ENCODE measurements at regions of chr12 and their contacts with region 1.

Region 1: GRCh38 chr12:123601602-123602489 is at the start of gene DDX55:
- DNase-seq: peak; percentile 86
- ATAC-seq: peak; percentile 89
- H3K4me3 Mint-ChIP-seq: peak within 1 kb of the TSS; percentile 97
- H3K27ac Mint-ChIP-seq: peak within 1 kb of the TSS; percentile 92
- H3K4me1 Mint-ChIP-seq: peaks cover 24% of the 10 kb centered on the region
- H3K27me3 Mint-ChIP-seq: no peaks in the 10 kb centered on the region
- CTCF ChIP-seq: no peak
- total RNA-seq, gene DDX55: 28.8 and 35.0 TPM in 2 replicates

Region 2: DNA sequence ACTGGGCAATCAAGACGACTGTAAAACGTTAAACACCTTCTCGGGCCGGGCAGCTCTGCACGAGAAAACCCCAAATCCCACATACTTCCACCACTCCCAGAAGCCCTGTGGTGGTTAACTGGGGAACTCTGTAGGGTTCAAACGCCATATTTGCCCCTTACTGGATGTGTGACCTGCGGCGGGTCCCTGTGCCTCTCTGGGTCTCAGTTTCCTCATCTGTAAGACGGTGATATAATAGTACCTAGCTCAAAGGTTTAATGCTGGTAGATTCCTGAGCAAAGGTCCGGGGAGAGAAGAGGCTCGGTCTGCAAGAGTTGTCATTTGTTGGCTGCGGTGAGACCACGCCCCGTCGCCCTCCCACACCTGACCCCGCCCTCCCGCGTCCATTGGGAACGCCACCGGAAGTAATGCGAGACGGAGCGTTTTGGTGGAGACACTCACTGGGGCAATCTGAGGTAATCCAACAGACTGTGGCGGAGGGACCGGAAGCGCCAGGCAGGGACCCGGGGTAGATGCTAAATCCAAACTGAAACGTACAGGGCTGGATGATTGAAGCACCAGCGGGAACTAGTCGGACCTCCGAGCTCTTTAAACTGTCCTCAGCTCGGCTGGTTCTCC is 627.5 kb before region 1 on chr12:
- CTCF ChIA-PET with region 1: no interaction called
- POLR2A ChIA-PET with region 1: interaction called, 5 read pairs
- intact Hi-C with region 1: loop called (anchors 2 kb)
- DNase-seq: peak; percentile 96
- ATAC-seq: peak; percentile 87
- H3K4me3 Mint-ChIP-seq: peak overlapping the region; percentile 98
- H3K27ac Mint-ChIP-seq: peak overlapping the region; percentile 99
- H3K4me1 Mint-ChIP-seq: peaks cover 28% of the 10 kb centered on the region
- H3K27me3 Mint-ChIP-seq: no peaks in the 10 kb centered on the region
- CTCF ChIP-seq: no peak

Region 3: GRCh38 chr12:123021688-123022604 is 579.9 kb before region 1 on chr12:
- CTCF ChIA-PET with region 1: no interaction called
- POLR2A ChIA-PET with region 1: no interaction called
- intact Hi-C with region 1: no loop called
- DNase-seq: no peak
- ATAC-seq: no peak
- H3K4me3 Mint-ChIP-seq: no peak overlapping the region
- H3K27ac Mint-ChIP-seq: no peak overlapping the region
- H3K4me1 Mint-ChIP-seq: no peaks in the 10 kb centered on the region
- H3K27me3 Mint-ChIP-seq: no peaks in the 10 kb centered on the region
- CTCF ChIP-seq: no peak

Region 4: GRCh38 chr12:123271001-123271729 is 330.7 kb before region 1 on chr12:
- CTCF ChIA-PET with region 1: interaction called, 3 read pairs
- POLR2A ChIA-PET with region 1: no interaction called
- intact Hi-C with region 1: loop called (anchors 1 kb)
- DNase-seq: peak; percentile 76
- ATAC-seq: peak; percentile 81
- H3K4me3 Mint-ChIP-seq: no peak overlapping the region
- H3K27ac Mint-ChIP-seq: no peak overlapping the region
- H3K4me1 Mint-ChIP-seq: peaks cover 31% of the 10 kb centered on the region
- H3K27me3 Mint-ChIP-seq: no peaks in the 10 kb centered on the region
- CTCF ChIP-seq: no peak

Region 5: DNA sequence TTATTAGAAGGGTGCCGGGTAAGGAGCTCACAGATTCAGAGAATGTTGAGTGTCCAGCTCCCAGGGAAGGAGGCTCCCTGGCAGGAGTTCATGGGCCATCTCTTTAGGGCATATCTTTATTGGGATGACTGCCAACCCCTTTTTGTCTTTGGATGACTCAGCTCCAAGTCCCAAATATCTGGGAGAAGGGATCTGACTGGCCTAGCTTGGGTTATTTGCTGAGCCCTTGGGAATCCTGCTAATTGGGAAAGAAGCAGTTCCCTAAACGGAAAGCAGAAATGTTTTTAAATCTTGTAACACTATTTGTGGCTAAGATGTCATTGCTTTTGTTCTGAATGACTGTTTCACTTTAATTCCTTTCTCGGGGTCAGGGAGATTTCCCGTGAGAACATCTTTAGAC is 12.7 kb after region 1 on chr12:
- CTCF ChIA-PET with region 1: interaction called, 3 read pairs
- POLR2A ChIA-PET with region 1: interaction called, 4 read pairs
- intact Hi-C with region 1: loop called (anchors 1 kb)
- DNase-seq: no peak
- ATAC-seq: no peak
- H3K4me3 Mint-ChIP-seq: no peak overlapping the region
- H3K27ac Mint-ChIP-seq: no peak overlapping the region
- H3K4me1 Mint-ChIP-seq: no peaks in the 10 kb centered on the region
- H3K27me3 Mint-ChIP-seq: no peaks in the 10 kb centered on the region
- CTCF ChIP-seq: no peak

Region 6: DNA sequence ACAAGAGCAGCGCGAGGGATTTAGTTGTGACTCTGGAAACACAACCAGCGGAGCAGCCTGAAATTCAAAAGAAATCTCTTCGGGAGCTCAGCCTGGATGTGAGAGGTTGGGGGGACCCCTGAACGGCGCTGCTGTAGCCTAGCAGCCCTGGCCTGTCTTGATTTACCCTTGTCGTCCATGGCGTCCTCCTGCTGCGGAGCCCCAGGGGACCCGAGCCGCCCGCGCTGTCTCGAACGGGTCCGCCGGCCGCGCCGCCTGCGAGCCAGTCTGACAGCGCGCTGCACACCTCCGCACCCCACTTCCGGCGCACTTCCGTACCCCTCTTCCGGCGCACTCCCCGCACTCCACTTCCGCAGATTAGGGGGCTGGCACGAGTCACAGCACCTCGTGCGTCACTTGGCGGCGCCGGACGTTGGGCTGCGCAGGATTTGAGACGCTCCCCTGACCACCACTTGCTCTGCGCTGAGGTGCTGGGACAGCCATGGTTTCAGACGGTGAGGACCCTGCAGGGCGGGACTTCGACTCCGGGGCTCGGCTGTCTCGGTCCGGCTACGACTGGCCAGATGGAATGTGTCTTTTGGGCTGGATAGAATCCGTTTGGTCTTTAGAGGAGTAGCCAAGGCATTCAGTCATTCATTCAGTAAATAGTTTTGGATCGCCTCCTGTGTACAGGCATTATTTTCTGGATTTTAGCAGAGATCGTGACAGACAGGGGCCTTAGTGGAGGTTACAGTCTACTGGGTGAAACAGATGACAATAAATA is 31.7 kb after region 1 on chr12 and contains the starts of genes EIF2B1 and GTF2H3:
- CTCF ChIA-PET with region 1: no interaction called
- POLR2A ChIA-PET with region 1: interaction called, 5 read pairs
- intact Hi-C with region 1: loop called (anchors 1 kb)
- DNase-seq: peak; percentile 96
- ATAC-seq: peak; percentile 98
- H3K4me3 Mint-ChIP-seq: peak within 1 kb of the TSS; percentile 96
- H3K27ac Mint-ChIP-seq: peak within 1 kb of the TSS; percentile 93
- H3K4me1 Mint-ChIP-seq: peaks cover 24% of the 10 kb centered on the region
- H3K27me3 Mint-ChIP-seq: no peaks in the 10 kb centered on the region
- CTCF ChIP-seq: no peak
- total RNA-seq, gene EIF2B1: 67.3 and 79.7 TPM in 2 replicates
- total RNA-seq, gene GTF2H3: 33.8 and 36.2 TPM in 2 replicates

Region 7: DNA sequence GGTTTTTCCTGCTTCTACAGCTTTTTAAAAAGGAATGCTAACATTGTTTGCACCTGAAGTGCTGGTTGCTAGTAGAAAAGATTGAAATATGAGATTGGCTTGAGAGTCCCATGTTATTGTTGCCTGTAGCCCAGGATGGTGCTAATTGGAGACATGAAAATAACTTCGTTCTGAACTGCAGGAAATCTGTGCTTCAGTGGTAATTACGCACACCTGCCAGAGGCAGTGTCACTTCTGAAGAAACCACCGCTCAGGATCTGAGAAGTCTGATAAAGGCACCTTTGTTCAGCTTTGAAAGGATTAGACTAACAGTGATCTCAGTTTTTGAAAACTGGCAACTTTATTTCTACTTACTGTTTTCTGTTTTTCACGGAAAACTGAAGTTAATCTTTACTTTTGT is 94.8 kb after region 1 on chr12:
- CTCF ChIA-PET with region 1: no interaction called
- POLR2A ChIA-PET with region 1: no interaction called
- intact Hi-C with region 1: no loop called
- DNase-seq: no peak
- ATAC-seq: no peak
- H3K4me3 Mint-ChIP-seq: no peak overlapping the region
- H3K27ac Mint-ChIP-seq: no peak overlapping the region
- H3K4me1 Mint-ChIP-seq: no peaks in the 10 kb centered on the region
- H3K27me3 Mint-ChIP-seq: no peaks in the 10 kb centered on the region
- CTCF ChIP-seq: no peak

Measured in activated B cell treated with CpG ODN at 0.5 μM for 24 hours (primary cell).